ENCODE measurements at regions of chr11 and their contacts with region 1.

Region 1: GRCh38 chr11:124622531-124623451 is at the start of gene TBRG1:
- DNase-seq: peak; percentile 90
- H3K4me3 ChIP-seq: peak within 1 kb of the TSS; percentile 76 to 95 (median 88)
- H3K27ac ChIP-seq: peak within 1 kb of the TSS; percentile 91 to 98 (median 95)
- H3K4me1 ChIP-seq: peaks cover 0 to 34% (median 20%) of the 10 kb centered on the region in 4 donors
- H3K27me3 ChIP-seq: no peaks in the 10 kb centered on the region
- CTCF ChIP-seq: peak in 1 of 5 experiments; percentile 19
- EP300 ChIP-seq: no peak
- POLR2A ChIP-seq: peak; percentile 91
- total RNA-seq, gene TBRG1: 19.8 to 44.0 (median 30.3) TPM

Region 2: DNA sequence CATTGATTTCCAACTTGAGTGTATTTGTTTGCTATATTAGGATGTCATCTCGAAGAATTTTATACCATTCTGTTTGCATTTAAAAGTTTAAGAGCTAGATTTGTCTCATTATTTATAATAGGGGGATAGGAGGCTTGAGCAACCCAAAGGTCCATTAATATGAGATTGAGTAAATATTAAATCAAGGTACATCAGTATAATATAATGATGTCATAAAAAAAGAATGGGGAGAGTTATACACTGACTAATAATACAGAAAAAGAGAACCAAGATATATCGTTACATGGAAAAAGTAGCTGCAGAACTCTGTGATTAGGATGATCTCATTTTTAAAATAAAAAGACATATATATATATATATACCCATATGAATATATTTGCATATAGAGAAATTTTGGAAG is 70.4 kb after region 1 on chr11:
- in situ Hi-C with region 1: no loop called
- intact Hi-C with region 1: no loop called
- DNase-seq: no peak
- H3K4me3 ChIP-seq: no peak overlapping the region
- H3K27ac ChIP-seq: no peak overlapping the region
- H3K4me1 ChIP-seq: no peaks in the 10 kb centered on the region
- H3K27me3 ChIP-seq: no peaks in the 10 kb centered on the region
- CTCF ChIP-seq: no peak
- EP300 ChIP-seq: no peak
- POLR2A ChIP-seq: no peak

Region 3: GRCh38 chr11:125358254-125358840 is 735.6 kb after region 1 on chr11:
- in situ Hi-C with region 1: no loop called
- intact Hi-C with region 1: loop called (anchors 10 kb)
- DNase-seq: no peak
- H3K4me3 ChIP-seq: no peak overlapping the region
- H3K27ac ChIP-seq: no peak overlapping the region
- H3K4me1 ChIP-seq: no peaks in the 10 kb centered on the region
- H3K27me3 ChIP-seq: no peaks in the 10 kb centered on the region
- CTCF ChIP-seq: no peak
- EP300 ChIP-seq: no peak
- POLR2A ChIP-seq: no peak

Measured in transverse colon (tissue), 4 donors.